Panc1 (cell line): ENCODE measurements at regions of chr10 and their contacts with region 1.

Region 1: GRCh38 chr10:61943674-61944410 is 42.3 kb downstream of the ARID5B start:
- DNase-seq: no peak
- ATAC-seq: no peak
- H3K4me3 ChIP-seq: no peak overlapping the region
- H3K27ac ChIP-seq: peak overlapping the region; percentile 88
- H3K4me1 ChIP-seq: peaks cover 58% of the 10 kb centered on the region
- H3K27me3 ChIP-seq: no peaks in the 10 kb centered on the region
- CTCF ChIP-seq: no peak; the same call in 1 of the 2 replicates

Region 2: GRCh38 chr10:60189861-60190475 is 1753.9 kb before region 1 on chr10:
- CTCF ChIA-PET with region 1: no interaction called
- POLR2A ChIA-PET with region 1: interaction called, 10 read pairs
- in situ Hi-C with region 1: no loop called
- intact Hi-C with region 1: no loop called
- DNase-seq: no peak
- ATAC-seq: no peak
- H3K4me3 ChIP-seq: no peak overlapping the region
- H3K27ac ChIP-seq: no peak overlapping the region
- H3K4me1 ChIP-seq: no peaks in the 10 kb centered on the region
- H3K27me3 ChIP-seq: no peaks in the 10 kb centered on the region
- CTCF ChIP-seq: no peak

Region 3: GRCh38 chr10:61899997-61900828 is 43.6 kb before region 1 on chr10:
- CTCF ChIA-PET with region 1: no interaction called
- POLR2A ChIA-PET with region 1: no interaction called
- in situ Hi-C with region 1: no loop called
- intact Hi-C with region 1: no loop called
- DNase-seq: peak; percentile 69
- ATAC-seq: peak; percentile 63
- H3K4me3 ChIP-seq: peak overlapping the region; percentile 62 to 93
- H3K27ac ChIP-seq: peak overlapping the region; percentile 100
- H3K4me1 ChIP-seq: peaks cover 49% of the 10 kb centered on the region
- H3K27me3 ChIP-seq: no peaks in the 10 kb centered on the region
- CTCF ChIP-seq: no peak

Region 4: DNA sequence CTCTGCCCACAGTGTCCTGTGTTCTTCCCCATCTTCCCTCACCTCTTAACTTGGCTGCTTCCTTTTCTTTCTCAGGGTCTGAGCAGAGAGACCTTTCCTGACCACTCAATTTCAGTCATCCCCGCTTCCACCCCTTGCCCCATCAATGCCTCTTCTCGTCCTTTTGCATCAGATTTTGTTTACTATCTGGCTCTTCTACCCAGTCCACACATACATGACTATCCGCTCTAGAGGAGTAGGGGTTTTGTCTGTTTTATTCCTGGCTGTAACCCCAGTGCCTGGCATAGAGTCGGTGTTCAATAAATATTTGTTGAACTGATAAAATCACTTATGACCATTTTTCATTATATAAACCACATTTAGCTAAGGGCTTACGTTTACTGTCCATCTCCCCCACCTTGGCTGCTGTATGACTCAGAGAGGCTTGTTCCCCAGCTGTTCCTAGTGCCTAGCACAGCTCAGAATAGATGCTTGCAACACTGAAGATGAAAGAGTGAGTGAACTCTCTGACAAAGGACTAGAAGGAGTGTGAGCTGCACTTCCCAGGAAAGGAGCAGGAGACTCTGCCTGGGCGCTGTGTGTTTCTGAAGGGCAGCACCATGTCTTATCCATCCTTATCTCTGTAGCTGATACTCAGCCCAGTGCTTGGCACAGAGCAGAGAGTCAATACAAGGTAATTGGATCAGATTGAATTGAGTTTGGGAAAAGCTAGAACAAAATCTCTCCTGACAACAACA is 20.5 kb before region 1 on chr10:
- CTCF ChIA-PET with region 1: interaction called, 10 read pairs
- POLR2A ChIA-PET with region 1: no interaction called
- in situ Hi-C with region 1: no loop called
- intact Hi-C with region 1: no loop called
- DNase-seq: no peak
- ATAC-seq: peak; percentile 73
- H3K4me3 ChIP-seq: no peak overlapping the region
- H3K27ac ChIP-seq: peak overlapping the region; percentile 65
- H3K4me1 ChIP-seq: peaks cover 30% of the 10 kb centered on the region
- H3K27me3 ChIP-seq: no peaks in the 10 kb centered on the region
- CTCF ChIP-seq: no peak

Region 5: DNA sequence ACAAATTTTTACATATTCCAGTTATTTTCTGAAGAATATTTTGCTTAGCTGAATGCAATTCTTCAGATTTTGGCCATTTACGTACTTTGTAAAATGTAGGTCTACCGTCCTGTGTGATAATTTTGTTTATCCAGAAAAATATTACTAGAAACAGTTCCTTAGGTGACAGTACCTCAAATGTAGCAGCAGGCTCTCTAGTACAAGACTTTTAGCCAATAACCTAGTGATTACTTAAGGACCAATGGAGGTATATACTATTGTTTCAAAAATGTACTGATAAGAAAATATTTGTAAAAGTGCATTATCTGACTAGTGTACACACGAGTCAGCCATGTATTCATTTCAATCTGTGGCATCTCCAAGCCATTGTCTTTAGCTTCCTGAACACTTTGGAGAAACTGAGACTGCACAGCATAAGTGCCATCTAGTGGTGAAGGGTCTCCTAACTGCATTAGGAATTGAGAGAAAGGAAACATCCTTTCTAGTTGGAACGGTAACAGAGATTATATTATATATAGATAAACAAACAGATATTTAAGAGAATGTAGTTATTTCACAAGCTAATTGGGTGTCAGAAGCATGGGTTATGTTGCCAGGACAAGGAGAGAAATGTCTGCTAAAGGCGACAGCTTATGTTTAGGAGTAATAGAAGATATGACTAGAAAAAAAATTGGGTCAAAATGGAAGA is 301.1 kb after region 1 on chr10:
- CTCF ChIA-PET with region 1: no interaction called
- POLR2A ChIA-PET with region 1: interaction called, 11 read pairs
- in situ Hi-C with region 1: no loop called
- intact Hi-C with region 1: no loop called
- DNase-seq: no peak
- ATAC-seq: peak; percentile 81
- H3K4me3 ChIP-seq: no peak overlapping the region
- H3K27ac ChIP-seq: peak overlapping the region; percentile 92
- H3K4me1 ChIP-seq: peaks cover 47% of the 10 kb centered on the region
- H3K27me3 ChIP-seq: no peaks in the 10 kb centered on the region
- CTCF ChIP-seq: peak; percentile 85; the same call in 1 of the 2 replicates

Region 6: DNA sequence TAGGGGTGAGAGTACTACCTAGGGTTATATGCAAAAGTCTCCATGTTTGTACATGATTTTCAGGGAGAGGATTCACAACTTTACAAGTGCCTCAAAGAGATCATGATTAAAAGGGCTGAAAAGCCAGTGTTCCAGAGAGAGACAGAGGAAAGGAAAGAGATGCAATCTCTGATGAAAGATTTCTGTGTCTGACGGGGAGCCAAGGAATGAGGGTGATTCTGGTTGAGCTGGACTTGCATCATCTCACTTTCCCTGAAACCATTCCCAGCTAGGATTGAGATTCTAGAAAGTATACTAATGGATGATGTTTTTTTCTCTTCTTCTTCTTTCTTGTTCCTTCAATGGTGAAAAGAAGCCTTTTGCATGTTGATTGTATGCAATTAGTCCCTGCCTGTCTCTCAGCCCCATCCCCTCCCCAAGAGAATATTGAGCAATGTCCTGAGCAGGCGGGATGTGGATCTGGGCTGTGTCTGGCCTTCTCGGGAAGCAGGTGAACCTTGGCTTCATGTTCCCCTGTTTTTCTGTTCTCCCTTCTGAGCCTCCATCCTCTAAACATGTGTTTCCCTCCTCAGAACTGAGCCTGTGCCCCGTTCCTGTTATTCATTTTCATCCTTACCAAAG is 616.5 kb after region 1 on chr10:
- CTCF ChIA-PET with region 1: interaction called, 12 read pairs
- POLR2A ChIA-PET with region 1: no interaction called
- in situ Hi-C with region 1: no loop called
- intact Hi-C with region 1: no loop called
- DNase-seq: no peak
- ATAC-seq: no peak
- H3K4me3 ChIP-seq: no peak overlapping the region
- H3K27ac ChIP-seq: no peak overlapping the region
- H3K4me1 ChIP-seq: no peaks in the 10 kb centered on the region
- H3K27me3 ChIP-seq: no peaks in the 10 kb centered on the region
- CTCF ChIP-seq: no peak